ENCODE measurements at regions of chr2 and their contacts with region 1.

Region 1: GRCh38 chr2:200104015-200104414 is 148.6 kb downstream of the MAIP1 start:
- DNase-seq: no peak
- H3K4me3 ChIP-seq: no peak overlapping the region
- H3K27ac ChIP-seq: no peak overlapping the region
- H3K4me1 ChIP-seq: peaks cover 5% of the 10 kb centered on the region
- H3K27me3 ChIP-seq: no peaks in the 10 kb centered on the region
- CTCF ChIP-seq: no peak
- EP300 ChIP-seq: no peak
- POLR2A ChIP-seq: no peak

Region 2: GRCh38 chr2:200039724-200040650 is 64.0 kb before region 1 on chr2:
- intact Hi-C with region 1: loop called in 1 of 4 experiments (anchors 10 kb)
- DNase-seq: peak in 1 of 5 donors; percentile 37
- H3K4me3 ChIP-seq: no peak overlapping the region
- H3K27ac ChIP-seq: no peak overlapping the region
- H3K4me1 ChIP-seq: peaks cover 7% of the 10 kb centered on the region
- H3K27me3 ChIP-seq: no peaks in the 10 kb centered on the region
- CTCF ChIP-seq: no peak
- EP300 ChIP-seq: no peak
- POLR2A ChIP-seq: no peak

Region 3: GRCh38 chr2:200193791-200194190 is 89.8 kb after region 1 on chr2:
- intact Hi-C with region 1: no loop called
- DNase-seq: no peak
- H3K4me3 ChIP-seq: no peak overlapping the region
- H3K27ac ChIP-seq: no peak overlapping the region
- H3K4me1 ChIP-seq: no peaks in the 10 kb centered on the region
- H3K27me3 ChIP-seq: no peaks in the 10 kb centered on the region
- CTCF ChIP-seq: no peak
- EP300 ChIP-seq: no peak
- POLR2A ChIP-seq: no peak

Measured in ovary (tissue), 10 donors.